Prostate gland (tissue), 2 donors: ENCODE measurements at regions of chr17 and their contacts with region 1.

Region 1: DNA sequence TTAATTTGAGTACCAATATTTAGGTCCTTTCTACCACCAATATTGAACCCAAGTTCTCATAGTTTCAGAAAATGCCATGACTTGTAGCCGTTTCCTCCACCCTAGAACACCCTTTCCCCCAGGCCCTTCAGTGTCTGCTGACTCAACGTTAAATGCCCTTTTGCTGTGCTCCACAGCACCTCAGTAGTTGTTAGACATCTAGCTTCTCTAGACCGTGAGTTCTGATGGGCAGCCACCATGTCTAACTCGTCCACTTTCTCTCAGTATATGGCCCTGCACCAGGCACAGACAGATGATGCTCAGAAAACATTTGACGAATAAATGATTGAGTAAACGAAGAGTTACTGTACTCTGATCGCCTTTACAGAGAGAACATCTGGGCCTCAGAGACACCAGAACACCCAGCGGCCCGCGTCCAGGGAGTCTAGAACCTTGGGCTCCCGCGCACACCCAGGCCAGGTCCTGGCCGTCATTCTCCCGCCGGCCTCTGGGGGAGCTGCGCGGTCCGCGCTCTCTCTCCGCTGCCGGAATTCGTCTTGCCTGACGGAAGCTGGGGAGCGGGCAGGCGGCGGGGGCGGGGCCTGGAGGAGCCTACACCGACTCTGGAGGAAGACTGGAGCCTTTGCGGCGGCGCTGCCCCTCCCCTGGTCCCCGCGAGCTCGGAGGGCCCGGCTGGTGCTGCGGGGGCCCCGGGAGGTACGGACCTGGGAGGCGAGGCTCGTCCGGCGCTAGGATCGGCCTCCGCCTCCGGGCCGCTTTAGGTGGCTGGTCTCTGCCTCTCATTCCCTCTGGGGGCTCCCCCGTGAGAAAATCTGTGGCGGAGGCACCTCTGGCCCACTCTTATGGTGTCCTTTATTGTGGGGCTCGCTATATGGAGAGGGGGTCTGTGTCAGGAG is at the start of gene NKIRAS2:
- DNase-seq: peak; percentile 90
- H3K4me3 ChIP-seq: peak within 1 kb of the TSS; percentile 71 to 84
- H3K27ac ChIP-seq: peak within 1 kb of the TSS; percentile 69 to 82
- H3K4me1 ChIP-seq: peaks cover 8% of the 10 kb centered on the region
- H3K27me3 ChIP-seq: no peaks in the 10 kb centered on the region
- CTCF ChIP-seq: peak; percentile 76 to 97 (median 94)
- POLR2A ChIP-seq: peak; percentile 52
- total RNA-seq, gene NKIRAS2: 38.8 to 98.8 TPM

Region 2: GRCh38 chr17:41966463-41967140 is 53.2 kb before region 1 on chr17 and contains the start of gene CNP:
- intact Hi-C with region 1: loop called (anchors 5 kb)
- DNase-seq: peak; percentile 88
- H3K4me3 ChIP-seq: peak within 1 kb of the TSS; percentile 72 to 92
- H3K27ac ChIP-seq: peak within 1 kb of the TSS; percentile 84 to 91
- H3K4me1 ChIP-seq: peaks cover 18% of the 10 kb centered on the region
- H3K27me3 ChIP-seq: no peaks in the 10 kb centered on the region
- CTCF ChIP-seq: peak in 2 of 4 experiments; percentile 5 to 30
- POLR2A ChIP-seq: peak; percentile 93
- total RNA-seq, gene CNP: 85.8 to 117 TPM